OCI-LY7 (cell line): ENCODE measurements at regions of chr13 and their contacts with region 1.

Region 1: GRCh38 chr13:66915596-66916185 is 314.4 kb downstream of the PCDH9 start:
- DNase-seq: peak; percentile 27
- H3K4me3 ChIP-seq: no peak overlapping the region
- H3K27ac ChIP-seq: no peak overlapping the region
- H3K4me1 ChIP-seq: peaks cover 8% of the 10 kb centered on the region
- CTCF ChIP-seq: no peak

Region 2: DNA sequence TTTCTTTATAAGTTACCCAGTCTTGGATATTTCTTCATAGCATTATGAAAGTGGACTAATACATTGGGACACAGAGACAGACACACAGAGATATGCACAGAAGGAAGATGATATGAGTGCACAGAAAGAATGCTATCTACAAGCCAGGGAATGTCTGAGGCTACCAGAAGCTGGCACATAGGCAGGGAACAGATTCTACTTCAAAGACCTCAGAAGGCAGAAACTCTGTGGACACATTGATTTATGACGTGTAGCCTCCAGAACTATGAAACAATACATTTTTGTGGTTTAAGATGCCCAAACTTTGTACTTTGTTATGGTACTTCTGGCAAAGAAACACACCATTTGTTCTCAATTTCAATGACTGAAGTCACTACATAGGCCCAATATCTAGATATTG is 242.3 kb before region 1 on chr13:
- CTCF ChIA-PET with region 1: no interaction called
- POLR2A ChIA-PET with region 1: no interaction called
- intact Hi-C with region 1: no loop called
- DNase-seq: no peak
- H3K4me3 ChIP-seq: no peak overlapping the region
- H3K27ac ChIP-seq: no peak overlapping the region
- H3K4me1 ChIP-seq: no peaks in the 10 kb centered on the region
- CTCF ChIP-seq: no peak

Region 3: DNA sequence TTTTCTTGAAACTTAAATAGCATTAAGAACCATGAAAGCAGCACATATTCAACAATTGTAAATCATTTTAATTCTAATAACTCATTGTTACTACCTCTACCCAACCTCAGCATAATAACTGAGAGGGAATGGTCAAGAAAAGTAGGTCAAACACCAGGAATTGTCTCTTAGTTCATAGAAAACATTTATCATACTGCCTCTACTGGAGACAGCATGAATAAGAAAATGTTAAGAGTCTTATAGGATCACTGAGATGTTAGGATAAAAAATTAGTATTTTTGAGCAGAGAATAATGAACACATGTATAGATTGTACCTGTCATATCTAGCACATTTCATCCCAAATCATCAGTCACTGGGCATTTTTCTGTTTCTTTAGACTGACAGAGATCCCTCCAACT is 200.9 kb before region 1 on chr13:
- CTCF ChIA-PET with region 1: no interaction called
- POLR2A ChIA-PET with region 1: no interaction called
- intact Hi-C with region 1: no loop called
- DNase-seq: no peak
- H3K4me3 ChIP-seq: no peak overlapping the region
- H3K27ac ChIP-seq: no peak overlapping the region
- H3K4me1 ChIP-seq: no peaks in the 10 kb centered on the region
- CTCF ChIP-seq: peak; percentile 69

Region 4: DNA sequence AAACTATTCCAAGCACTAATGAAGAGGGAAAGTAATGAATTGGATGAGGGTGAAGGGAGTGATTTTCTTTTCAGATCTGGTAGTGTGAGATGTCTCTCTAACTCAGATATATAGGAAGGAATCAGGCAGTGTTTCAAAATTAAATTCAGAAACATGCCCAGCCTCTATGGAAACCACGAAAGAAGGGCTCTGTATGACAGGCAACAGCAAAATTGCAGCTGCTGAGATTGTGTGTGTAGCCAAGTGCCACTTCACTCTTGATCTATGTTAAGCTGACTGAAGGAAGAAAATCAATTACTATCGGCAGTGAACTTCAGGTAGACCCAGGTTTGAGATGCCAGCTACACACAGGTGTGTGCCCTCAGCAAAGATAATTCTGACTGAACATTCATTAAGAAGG is 72.9 kb before region 1 on chr13:
- CTCF ChIA-PET with region 1: no interaction called
- POLR2A ChIA-PET with region 1: no interaction called
- intact Hi-C with region 1: no loop called
- DNase-seq: no peak
- H3K4me3 ChIP-seq: no peak overlapping the region
- H3K27ac ChIP-seq: no peak overlapping the region
- H3K4me1 ChIP-seq: no peaks in the 10 kb centered on the region
- CTCF ChIP-seq: no peak

Region 5: DNA sequence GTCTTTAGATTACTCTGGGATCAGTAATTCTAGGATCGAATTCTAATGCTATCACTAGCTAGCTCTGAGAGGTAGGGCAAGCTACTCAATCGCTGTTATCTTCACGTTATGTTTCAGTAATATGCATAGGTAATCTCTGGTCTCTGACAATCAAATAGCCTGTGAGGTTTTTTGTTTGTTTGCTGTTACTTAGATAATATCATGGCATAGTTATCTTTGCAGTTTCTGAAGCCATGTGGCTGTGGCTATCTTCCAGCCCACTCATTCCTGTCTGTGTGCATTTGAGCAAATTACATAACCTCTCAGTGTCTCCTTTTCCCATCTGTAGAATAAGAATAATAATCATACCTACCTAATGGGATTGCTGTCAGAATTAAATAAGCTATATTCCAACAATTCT is 15.7 kb before region 1 on chr13:
- CTCF ChIA-PET with region 1: no interaction called
- POLR2A ChIA-PET with region 1: interaction called, 17 read pairs
- intact Hi-C with region 1: no loop called
- DNase-seq: no peak
- H3K4me3 ChIP-seq: no peak overlapping the region
- H3K27ac ChIP-seq: no peak overlapping the region
- H3K4me1 ChIP-seq: peaks cover 7% of the 10 kb centered on the region
- CTCF ChIP-seq: no peak

Region 6: DNA sequence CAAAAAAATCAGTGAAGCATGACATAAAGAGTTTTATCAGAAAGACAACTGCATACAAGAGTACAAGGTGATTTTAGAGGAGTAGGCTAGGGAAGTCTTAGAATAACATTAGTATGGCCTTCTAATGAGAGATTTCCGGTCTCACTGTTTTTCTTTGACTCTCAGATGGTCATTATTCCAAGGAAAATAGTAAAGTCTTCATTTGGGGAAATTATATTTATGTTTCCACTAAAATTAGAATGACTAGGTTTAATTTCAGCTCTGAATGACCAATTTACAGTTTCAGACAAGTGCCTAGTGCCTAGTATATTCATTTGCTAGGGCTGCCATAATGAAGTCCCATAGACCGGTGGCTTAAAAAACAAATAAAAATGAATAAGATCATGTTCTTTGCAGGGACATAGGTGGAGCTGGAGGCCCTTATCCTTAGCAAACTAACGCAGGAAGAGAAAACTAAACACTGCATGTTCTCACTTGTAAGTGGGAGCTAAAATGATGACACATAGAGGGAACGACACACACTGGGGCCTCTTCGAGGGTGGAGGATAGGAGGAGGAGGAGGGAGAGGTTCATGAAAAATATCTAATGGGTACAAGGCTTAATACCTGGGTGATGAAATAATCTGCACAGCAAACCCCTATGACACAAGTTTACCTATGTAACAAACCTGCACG is 11.3 kb after region 1 on chr13:
- CTCF ChIA-PET with region 1: no interaction called
- POLR2A ChIA-PET with region 1: interaction called, 16 read pairs
- intact Hi-C with region 1: no loop called
- DNase-seq: no peak
- H3K4me3 ChIP-seq: no peak overlapping the region
- H3K27ac ChIP-seq: no peak overlapping the region
- H3K4me1 ChIP-seq: peaks cover 11% of the 10 kb centered on the region
- CTCF ChIP-seq: no peak

Region 7: GRCh38 chr13:67224148-67224846 is 308.6 kb after region 1 on chr13:
- CTCF ChIA-PET with region 1: no interaction called
- POLR2A ChIA-PET with region 1: no interaction called
- intact Hi-C with region 1: no loop called
- DNase-seq: peak; percentile 86
- H3K4me3 ChIP-seq: peak overlapping the region; percentile 62
- H3K27ac ChIP-seq: peak overlapping the region; percentile 48
- H3K4me1 ChIP-seq: peaks cover 56% of the 10 kb centered on the region
- CTCF ChIP-seq: peak; percentile 87